ENCODE measurements at regions of chr1 and their contacts with region 1.

Region 1: GRCh38 chr1:226827968-226828513 is 42.4 kb upstream of the PSEN2 start:
- DNase-seq: peak; percentile 87 to 99 (median 96)

Region 2: DNA sequence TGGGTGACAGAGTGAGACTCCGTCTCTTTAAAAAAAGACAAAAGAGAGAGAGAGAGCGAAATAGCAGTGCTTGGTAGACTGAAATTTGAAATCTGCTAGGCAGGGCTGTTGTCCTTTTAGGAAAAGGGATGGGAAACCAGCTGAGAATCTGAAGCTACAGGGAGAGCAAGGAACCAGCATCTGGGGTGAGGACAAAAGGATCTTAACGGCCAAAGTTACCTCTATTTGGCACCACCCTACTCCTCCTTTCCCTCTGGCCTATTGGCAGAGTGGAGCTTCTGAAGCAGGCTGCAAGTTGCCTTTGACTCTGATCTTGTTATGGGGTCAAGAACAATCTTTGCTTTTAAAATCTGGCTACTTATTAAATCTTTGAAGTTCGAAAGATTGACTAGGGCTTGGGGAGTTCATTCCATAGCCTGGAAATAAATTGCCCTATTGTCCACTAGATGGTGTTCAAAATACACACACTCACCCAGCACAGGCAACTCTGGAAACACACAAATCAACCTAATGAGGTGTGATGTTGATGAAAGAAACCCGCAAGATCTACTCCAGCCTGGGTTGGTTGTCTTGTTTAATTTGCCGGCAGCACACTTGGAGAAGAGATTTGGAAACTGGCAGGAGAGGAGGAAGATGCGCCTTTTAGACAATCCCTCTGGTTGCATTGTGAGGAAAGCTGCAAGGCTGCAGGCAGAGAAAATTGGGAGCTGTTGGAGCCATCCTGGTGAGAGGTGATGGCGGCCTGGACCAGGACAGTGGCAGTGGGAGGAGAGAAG is 403.6 kb before region 1 on chr1:
- intact Hi-C with region 1: loop called (anchors 10 kb)
- DNase-seq: peak in 1 of 10 donors; percentile 21

Region 3: GRCh38 chr1:226547754-226548191 is 280.3 kb before region 1 on chr1:
- intact Hi-C with region 1: loop called (anchors 5 kb)
- DNase-seq: peak; percentile 56 to 95 (median 78)

Region 4: DNA sequence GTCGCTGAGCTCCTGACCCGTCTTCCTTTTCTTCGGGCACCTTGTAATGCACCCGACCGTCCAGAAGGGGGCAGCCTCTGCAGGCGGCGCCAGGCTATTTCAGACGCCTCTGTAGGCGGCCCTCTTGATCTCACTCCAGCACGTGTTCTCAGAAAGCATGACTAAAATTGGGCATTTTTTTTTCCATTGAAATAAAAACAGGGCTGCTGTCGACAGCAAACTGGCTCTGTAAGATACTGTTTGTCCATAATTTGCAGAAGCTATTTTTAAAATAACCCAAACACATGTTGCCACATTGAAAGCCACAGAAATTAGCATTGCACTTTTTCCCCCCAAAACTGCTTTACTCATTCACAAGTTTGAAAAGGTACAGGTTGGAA is 201.5 kb before region 1 on chr1:
- intact Hi-C with region 1: loop called (anchors 2 kb)
- DNase-seq: peak; percentile 49 to 96 (median 80)

Region 5: GRCh38 chr1:226634166-226634588 is 193.9 kb before region 1 on chr1:
- intact Hi-C with region 1: loop called (anchors 2 kb)
- DNase-seq: peak; percentile 67 to 97 (median 88)

Region 6: GRCh38 chr1:226702957-226703831 is 124.8 kb before region 1 on chr1:
- intact Hi-C with region 1: loop called (anchors 10 kb)
- DNase-seq: peak; percentile 59 to 97 (median 72)

Region 7: DNA sequence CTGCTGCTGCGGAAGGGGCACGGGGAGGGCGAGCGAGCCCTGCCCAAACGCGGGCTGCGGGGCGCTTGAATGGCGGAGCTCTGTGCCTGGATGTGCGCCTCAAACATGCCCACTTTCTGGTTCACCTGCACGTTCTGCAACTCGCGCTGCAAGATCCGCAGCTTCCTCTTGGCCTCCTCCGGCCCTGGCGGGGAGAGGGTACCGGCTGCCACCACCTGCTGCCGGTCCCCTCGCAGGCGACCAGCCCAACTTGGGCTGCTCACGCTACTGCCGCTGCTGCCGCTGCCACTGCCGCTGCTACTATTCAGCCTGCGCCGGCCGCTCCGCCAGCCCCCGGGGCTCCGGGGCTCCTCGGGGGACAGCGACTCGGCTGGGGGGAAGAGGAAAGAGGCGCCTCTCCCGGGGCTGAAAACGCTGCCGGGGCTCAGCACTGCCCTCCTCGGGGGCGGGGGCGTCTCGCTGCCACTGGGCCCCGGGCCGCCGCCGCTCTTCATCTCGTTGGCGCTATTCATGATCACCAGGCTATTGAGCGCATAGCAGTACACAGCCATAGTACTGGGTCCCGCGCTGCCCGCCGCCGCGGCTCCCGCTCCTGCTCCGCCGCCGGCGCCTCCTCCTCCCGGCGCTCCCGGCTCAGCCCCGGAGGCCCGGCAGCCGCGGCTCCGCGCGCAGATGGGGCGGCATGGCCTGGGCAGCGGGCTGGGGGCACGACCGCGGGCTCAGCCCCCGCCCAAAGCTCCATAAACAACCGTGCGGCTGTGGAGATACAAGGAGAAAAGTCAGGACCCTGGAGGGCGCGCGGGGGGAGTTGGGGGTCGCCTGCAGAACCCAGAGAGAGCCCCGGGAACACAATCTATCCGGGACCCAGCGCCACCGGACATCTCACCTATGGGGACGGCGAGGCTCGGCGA is 90.9 kb before region 1 on chr1:
- intact Hi-C with region 1: loop called (anchors 2 kb)
- DNase-seq: peak; percentile 56 to 96 (median 72)

Measured in posterior cingulate gyrus (tissue), 11 donors.